Mammary epithelial cell (primary cell): ENCODE measurements at regions of chr9 and their contacts with region 1.

Region 1: GRCh38 chr9:137578518-137579258 is at the start of gene DPH7:
- DNase-seq: peak; percentile 91
- H3K4me3 ChIP-seq: peak within 1 kb of the TSS; percentile 90 to 98 (median 98)
- H3K27ac ChIP-seq: peak within 1 kb of the TSS; percentile 48
- H3K4me1 ChIP-seq: peaks cover 26% of the 10 kb centered on the region
- H3K27me3 ChIP-seq: no peaks in the 10 kb centered on the region
- CTCF ChIP-seq: peak; percentile 78 to 94
- total RNA-seq, gene DPH7: 25.0 to 41.4 TPM

Region 2: DNA sequence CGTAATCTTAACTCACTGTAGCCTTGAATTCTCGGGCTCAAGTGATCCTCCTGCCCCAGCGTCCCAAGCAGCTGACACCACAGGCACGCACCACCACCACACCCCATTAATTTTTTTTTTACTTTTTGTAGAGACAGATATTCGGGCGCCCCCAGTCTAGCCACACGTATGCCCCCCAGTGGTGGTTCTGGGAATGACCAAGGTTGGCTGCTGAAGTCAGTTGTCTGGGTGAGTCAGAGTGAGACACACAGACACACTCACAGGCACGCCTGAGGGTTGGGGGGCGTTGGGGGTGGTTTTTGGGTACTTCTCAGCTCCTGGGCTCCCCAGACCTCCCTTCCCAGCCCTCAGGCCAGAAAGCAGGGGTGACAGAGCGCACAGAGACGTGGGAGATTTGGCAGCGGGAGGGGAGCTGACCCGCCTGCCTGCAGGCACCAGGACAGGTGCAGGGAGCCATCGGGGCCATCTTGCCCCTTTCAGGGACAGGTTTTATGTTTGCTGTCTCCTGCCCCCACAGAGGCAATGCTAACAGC is 133.3 kb before region 1 on chr9:
- CTCF ChIA-PET with region 1: no interaction called
- dilution Hi-C with region 1: loop called (anchors 5 kb)
- in situ Hi-C with region 1: no loop called
- intact Hi-C with region 1: no loop called
- DNase-seq: peak; percentile 81
- H3K4me3 ChIP-seq: no peak overlapping the region
- H3K27ac ChIP-seq: no peak overlapping the region
- H3K4me1 ChIP-seq: peaks cover 17% of the 10 kb centered on the region
- H3K27me3 ChIP-seq: no peaks in the 10 kb centered on the region
- CTCF ChIP-seq: peak; percentile 81 to 83

Region 3: DNA sequence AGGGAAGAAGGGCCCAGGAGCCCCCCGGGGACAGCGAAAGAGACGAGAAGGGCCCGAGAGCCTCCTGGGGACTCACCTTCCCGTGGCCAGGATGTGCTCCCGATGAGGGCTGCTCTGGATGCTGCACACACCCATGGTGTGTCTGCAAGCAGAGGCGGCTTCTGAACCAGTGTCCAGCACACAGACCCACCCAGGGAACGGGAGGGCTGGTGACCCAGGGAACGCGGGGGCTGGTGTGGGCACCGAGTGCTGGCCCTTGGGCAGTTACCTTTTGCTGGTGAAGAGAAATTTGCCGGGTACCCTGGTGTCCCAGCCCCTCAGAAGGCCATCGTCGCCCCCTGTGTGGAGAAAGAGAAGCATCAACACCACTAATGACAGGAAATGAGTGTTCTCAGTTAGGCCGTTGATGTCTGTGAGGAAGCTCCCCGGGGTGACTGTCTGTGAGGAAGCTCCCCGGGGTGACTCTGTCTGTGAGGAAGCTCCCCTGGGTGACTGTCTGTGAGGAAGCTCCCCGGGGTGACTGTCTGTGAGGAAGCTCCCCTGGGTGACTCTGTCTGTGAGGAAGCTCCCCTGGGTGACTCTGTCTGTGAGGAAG is 13.8 kb before region 1 on chr9:
- CTCF ChIA-PET with region 1: no interaction called
- dilution Hi-C with region 1: no loop called
- in situ Hi-C with region 1: no loop called
- intact Hi-C with region 1: loop called (anchors 2 kb)
- DNase-seq: no peak
- H3K4me3 ChIP-seq: no peak overlapping the region
- H3K27ac ChIP-seq: no peak overlapping the region
- H3K4me1 ChIP-seq: no peaks in the 10 kb centered on the region
- H3K27me3 ChIP-seq: no peaks in the 10 kb centered on the region
- CTCF ChIP-seq: no peak

Region 4: DNA sequence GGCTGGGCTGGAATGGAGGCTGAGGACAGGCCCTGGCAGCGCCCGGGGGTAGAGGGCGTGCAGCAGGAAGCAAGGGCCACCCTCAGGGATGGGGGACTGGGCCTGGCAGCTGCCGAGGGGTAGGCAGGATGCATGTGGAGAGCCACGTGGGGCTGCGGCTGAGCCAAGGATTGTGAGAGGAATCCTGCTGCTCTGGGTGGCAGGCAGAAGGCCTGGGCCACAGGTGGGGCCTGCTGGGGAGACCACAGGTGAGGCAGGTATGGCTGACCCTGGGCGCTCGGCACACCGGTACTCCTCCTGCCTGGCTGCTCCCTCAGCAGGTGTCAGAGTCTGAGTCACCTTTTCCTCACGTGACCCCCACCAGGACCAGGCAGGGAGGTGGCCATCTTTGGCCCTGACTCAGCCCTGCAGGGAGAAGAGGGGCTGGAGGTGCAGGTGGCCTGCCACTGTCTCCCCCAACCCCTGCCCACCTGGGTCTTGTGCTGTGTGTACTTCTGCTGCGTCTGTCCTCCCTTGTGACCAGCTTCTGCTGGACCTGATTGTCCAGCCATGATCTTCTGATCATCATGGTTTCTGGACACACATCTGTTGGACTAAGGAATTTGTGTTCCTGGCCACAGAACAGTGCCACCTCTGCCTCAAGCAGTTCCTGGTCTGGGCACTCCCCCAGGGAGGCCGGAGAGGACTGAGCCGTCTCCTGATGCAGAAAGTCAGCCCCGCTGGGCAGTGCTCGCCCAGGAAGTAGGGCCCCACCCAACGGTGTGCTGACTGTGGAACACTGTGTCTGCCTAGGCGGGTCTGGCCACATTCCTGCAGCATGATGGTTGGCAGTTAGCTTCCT is 33.2 kb after region 1 on chr9:
- CTCF ChIA-PET with region 1: no interaction called
- dilution Hi-C with region 1: loop called (anchors 5 kb)
- in situ Hi-C with region 1: no loop called
- intact Hi-C with region 1: loop called (anchors 1 kb)
- DNase-seq: peak; percentile 97
- H3K4me3 ChIP-seq: peak overlapping the region in 2 of 3 experiments; percentile 8 to 23
- H3K27ac ChIP-seq: peak overlapping the region; percentile 76
- H3K4me1 ChIP-seq: peaks cover 55% of the 10 kb centered on the region
- H3K27me3 ChIP-seq: no peaks in the 10 kb centered on the region
- CTCF ChIP-seq: peak in 1 of 2 donors; percentile 3

Region 5: GRCh38 chr9:137672907-137673791 is 94.5 kb after region 1 on chr9:
- CTCF ChIA-PET with region 1: no interaction called
- dilution Hi-C with region 1: loop called (anchors 5 kb)
- in situ Hi-C with region 1: no loop called
- intact Hi-C with region 1: no loop called
- DNase-seq: peak; percentile 48
- H3K4me3 ChIP-seq: no peak overlapping the region
- H3K27ac ChIP-seq: no peak overlapping the region
- H3K4me1 ChIP-seq: peaks cover 8% of the 10 kb centered on the region
- H3K27me3 ChIP-seq: no peaks in the 10 kb centered on the region
- CTCF ChIP-seq: peak; percentile 87 to 89